Head of caudate nucleus (tissue), 42 donors: ENCODE measurements at regions of chr13 and their contacts with region 1.

Region 1: DNA sequence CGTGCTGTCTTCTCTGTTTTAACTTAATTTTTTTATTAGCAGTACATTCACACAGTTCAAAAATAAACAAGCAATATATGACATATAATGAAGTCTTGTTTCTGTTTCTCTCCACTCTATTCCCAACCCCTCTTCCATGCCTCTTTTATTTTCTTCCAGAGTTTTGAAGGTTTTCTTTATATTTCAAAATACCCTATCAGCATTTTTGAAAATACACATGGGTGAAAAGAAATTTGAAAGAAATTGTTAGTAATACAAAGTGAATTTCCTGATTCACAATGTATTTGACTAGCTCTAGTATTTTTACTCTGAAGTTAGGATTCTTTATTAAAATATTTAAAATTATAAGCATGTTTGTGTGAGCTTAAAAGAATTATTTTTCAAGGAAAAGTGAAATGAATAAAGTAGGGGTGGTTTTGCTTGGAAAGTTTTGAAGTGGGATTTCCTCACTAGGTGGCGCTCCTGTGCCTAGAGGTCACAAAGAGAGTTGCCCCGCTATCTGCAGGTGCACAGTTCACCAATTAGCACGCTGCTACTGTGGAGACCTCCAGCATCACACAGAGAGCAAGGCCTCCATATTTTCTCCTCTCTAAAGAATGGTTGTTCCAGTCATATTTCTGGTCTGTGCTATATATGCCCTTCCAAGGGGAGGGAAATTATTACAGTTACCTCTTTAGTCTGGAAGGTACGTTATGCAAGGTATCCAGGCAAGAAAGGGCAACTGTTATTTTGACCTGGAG is 37.6 kb downstream of the SOX21 start:
- DNase-seq: peak; percentile 23 to 91 (median 68)

Region 2: DNA sequence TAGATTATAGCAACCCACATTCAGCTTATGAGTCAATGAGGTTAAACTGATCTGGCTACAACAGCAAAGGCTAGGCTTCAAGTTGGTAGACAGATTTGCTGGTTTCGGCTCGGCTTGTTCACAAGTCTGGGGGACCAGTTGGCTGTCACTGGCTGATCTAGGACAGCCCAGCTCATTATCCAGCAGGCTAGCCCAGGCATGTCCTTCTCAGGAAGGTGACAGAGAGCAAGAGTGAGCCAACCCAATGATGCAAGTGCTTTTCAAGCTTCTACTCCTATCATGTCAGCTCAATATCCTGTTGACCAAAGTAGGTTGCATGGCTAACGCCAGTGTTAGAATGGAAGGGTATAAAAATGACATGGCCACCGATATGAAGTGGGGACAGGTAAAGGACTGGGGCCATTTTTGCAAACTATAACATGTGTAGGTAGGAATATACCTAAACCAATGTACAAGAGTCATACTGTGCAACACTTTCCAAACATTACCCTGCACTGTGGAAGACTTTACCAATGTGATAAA is 258.5 kb after region 1 on chr13:
- intact Hi-C with region 1: no loop called
- DNase-seq: no peak

Region 3: GRCh38 chr13:95156208-95156607 is 481.4 kb after region 1 on chr13:
- intact Hi-C with region 1: loop called (anchors 5 kb)
- DNase-seq: peak in 3 of 42 donors; percentile 9 to 24 (median 21)

Region 4: DNA sequence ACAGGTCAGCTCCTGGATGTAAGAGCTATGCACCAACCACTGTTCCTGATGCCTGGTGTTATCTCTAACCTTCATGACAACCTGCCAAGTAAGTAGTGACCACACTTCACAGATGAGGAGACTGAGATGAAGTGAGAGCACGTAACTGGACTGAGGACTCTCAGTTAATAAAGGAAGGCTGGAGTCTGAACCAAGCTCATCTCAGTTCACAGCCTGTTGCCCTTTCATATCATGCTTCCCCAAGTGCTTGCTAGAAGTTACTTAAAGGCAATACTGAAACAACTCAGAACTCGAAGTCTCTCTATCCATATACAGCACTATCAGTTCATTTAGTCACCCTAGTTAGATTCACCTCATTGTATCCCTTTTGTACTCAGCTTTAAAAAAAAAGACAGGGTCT is 506.8 kb after region 1 on chr13:
- intact Hi-C with region 1: no loop called
- DNase-seq: no peak